BJ (cell line): ENCODE measurements at regions of chr2 and their contacts with region 1.

Region 1: DNA sequence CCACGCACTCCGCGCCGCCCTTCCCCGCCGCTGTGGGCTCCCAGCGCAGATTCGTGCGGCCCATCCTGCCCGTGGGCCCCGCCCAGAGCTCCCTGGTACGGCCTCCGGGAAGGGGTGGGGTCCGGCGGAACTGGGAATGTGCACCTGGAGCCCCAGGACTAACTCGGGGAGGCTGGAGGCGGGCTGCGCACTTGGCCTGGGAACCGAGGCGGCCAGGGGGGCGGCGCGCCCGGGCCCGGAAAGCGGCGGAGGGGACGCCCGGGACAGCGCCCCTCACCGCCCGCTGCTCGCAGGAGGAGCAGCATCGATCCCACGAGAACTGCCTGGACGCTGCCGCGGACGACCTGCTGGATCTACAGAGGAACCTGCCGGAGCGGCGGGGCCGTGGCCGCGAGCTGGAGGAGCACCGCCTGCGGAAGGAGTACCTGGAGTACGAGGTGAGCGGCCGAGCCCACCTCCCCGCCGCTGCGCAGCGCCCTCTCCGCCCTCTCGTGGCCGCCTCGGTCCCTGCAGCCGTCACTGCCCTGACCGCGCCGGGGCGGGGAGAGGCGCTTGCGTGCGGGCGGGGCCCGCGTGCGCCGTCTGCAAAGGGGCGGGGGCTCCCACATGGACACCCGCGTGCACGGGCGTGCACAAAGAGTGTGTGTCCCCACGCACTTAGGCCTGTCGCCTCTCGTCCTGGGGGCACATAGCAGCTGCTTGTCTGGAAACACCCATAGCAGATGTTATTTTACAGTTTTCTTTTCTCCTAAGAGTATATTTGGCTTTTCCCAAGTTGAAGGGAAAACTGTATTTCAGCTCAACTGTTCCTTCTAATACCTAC is 25.2 kb downstream of the PSD4 start:
- DNase-seq: no peak
- H3K4me3 ChIP-seq: peak overlapping the region; percentile 66
- H3K27me3 ChIP-seq: no peaks in the 10 kb centered on the region
- CTCF ChIP-seq: peak; percentile 67

Region 2: GRCh38 chr2:113041871-113042508 is 157.0 kb before region 1 on chr2:
- CTCF ChIA-PET with region 1: no interaction called
- POLR2A ChIA-PET with region 1: no interaction called
- DNase-seq: no peak
- H3K4me3 ChIP-seq: no peak overlapping the region
- H3K27me3 ChIP-seq: peaks cover 14% of the 10 kb centered on the region
- CTCF ChIP-seq: no peak

Region 3: GRCh38 chr2:113089916-113090315 is 109.1 kb before region 1 on chr2:
- CTCF ChIA-PET with region 1: interaction called, 11 read pairs
- POLR2A ChIA-PET with region 1: no interaction called
- DNase-seq: no peak
- H3K4me3 ChIP-seq: no peak overlapping the region
- H3K27me3 ChIP-seq: peaks cover 13% of the 10 kb centered on the region
- CTCF ChIP-seq: no peak

Region 4: DNA sequence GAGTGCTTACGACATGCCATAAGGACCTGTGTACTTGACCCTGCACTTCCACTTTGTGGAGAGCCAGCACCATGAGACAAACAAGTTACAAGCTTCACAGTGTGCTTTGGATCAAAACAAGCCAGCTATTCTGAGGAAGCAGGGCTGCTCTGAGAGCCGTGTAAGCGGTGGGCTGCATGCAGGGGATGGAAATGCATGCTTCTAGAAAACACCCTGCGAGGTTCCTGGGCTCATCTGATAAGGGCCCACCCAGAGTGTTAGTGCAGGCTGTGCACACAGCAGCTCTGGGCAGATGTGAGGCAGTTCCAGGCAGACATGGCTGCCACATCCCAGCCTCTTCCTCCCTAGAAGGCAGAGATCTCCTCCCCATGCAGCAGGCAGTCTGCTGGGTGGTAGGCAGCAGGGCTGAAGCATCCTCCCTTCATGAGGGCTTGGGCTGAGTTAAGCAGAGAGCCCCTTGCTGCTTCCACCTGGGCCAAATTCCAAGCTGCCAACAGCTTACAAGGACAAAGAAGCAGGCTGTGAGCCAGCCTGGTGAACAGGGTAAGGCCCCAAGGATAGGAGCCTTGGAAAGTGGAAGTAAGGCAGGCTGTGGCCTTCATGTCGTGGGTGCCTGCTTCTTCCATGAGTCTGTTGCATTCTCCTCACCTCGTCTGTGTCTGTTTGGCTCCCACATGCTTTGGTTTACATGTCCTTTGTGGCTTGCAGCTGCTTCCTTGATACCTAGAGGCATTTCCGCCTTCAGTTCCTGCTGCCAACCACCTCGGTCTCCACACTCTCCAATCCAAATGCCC is 17.5 kb before region 1 on chr2:
- CTCF ChIA-PET with region 1: interaction called, 13 read pairs
- POLR2A ChIA-PET with region 1: no interaction called
- DNase-seq: no peak
- H3K4me3 ChIP-seq: no peak overlapping the region
- H3K27me3 ChIP-seq: no peaks in the 10 kb centered on the region
- CTCF ChIP-seq: no peak

Region 5: GRCh38 chr2:113225263-113226259 is 26.6 kb after region 1 on chr2:
- CTCF ChIA-PET with region 1: interaction called, 21 read pairs
- POLR2A ChIA-PET with region 1: no interaction called
- DNase-seq: no peak
- H3K4me3 ChIP-seq: no peak overlapping the region
- H3K27me3 ChIP-seq: no peaks in the 10 kb centered on the region
- CTCF ChIP-seq: no peak

Region 6: DNA sequence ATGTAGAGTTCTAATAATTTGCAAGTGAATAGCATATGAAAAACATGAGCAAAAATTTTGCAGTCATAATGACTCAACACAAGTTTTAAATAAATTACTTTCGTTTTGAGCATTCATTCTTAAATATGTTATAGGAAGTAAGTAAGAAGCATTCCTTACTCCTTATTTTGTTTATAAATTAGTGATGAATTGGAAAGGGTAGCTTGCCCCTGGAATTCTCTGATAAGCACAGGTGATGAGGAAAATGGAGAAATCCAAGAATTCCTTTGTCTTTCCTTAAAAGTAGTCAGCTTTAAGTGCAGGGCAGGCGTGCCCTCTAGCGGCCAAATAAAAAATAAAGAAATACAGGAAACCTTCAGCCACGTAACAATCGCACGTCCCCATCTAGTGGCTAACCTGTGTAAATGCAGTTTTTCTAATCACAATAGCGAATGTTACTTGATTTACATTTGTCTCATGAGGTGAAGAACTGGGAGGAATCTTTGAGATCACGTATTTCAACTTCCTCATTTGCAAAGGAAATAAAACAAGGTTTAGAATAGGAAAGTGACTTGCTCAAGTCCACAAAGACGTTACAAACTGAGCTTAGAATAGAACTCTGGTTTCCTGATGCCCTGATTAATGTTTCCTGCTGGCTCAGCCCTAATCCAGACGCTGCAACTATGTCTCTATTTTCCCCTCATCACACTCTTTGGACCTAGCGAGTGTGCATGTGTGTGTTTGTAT is 191.3 kb after region 1 on chr2:
- CTCF ChIA-PET with region 1: interaction called, 22 read pairs
- POLR2A ChIA-PET with region 1: no interaction called
- DNase-seq: peak; percentile 31
- H3K4me3 ChIP-seq: no peak overlapping the region
- H3K27me3 ChIP-seq: no peaks in the 10 kb centered on the region
- CTCF ChIP-seq: peak; percentile 72